Activated CD8-positive, alpha-beta T cell treated with anti-CD3 and anti-CD28 coated beads for 36 hours (primary cell): ENCODE measurements at regions of chr6 and their contacts with region 1.

Region 1: GRCh38 chr6:100479179-100480035 is 14.7 kb upstream of the SIM1 start:
- DNase-seq: no peak
- ATAC-seq: peak; percentile 55
- H3K4me3 Mint-ChIP-seq: no peak overlapping the region
- H3K27ac Mint-ChIP-seq: no peak overlapping the region
- H3K4me1 Mint-ChIP-seq: no peaks in the 10 kb centered on the region
- H3K27me3 Mint-ChIP-seq: peaks cover 26% of the 10 kb centered on the region
- CTCF ChIP-seq: peak; percentile 69

Region 2: DNA sequence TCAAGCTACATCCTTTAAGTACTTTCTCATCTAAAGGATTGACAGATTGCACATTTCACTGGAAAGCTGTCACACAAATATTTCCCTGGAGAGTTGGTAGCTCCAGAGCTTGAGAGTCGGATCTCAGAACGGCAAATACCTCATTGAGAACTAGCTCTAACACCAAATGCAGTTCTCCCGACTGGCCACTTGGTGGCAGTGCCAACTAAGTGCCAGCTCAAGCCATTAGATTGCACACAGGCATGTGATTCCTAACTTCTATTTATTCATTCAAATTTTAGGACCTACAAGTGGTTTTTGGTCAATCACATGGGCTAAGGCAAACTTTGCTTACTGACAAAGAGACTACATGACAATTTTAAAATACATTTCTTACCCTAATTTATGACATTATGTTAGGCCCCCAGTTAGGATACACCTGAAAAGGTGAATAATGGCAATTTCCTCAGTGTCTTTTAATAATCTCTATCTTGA is 477.5 kb before region 1 on chr6:
- CTCF ChIA-PET with region 1: interaction called, 6 read pairs
- POLR2A ChIA-PET with region 1: no interaction called
- intact Hi-C with region 1: loop called (anchors 5 kb)
- DNase-seq: peak; percentile 43
- ATAC-seq: peak; percentile 74
- H3K4me3 Mint-ChIP-seq: no peak overlapping the region
- H3K27ac Mint-ChIP-seq: no peak overlapping the region
- H3K4me1 Mint-ChIP-seq: no peaks in the 10 kb centered on the region
- H3K27me3 Mint-ChIP-seq: peaks cover 18% of the 10 kb centered on the region
- CTCF ChIP-seq: peak; percentile 94

Region 3: DNA sequence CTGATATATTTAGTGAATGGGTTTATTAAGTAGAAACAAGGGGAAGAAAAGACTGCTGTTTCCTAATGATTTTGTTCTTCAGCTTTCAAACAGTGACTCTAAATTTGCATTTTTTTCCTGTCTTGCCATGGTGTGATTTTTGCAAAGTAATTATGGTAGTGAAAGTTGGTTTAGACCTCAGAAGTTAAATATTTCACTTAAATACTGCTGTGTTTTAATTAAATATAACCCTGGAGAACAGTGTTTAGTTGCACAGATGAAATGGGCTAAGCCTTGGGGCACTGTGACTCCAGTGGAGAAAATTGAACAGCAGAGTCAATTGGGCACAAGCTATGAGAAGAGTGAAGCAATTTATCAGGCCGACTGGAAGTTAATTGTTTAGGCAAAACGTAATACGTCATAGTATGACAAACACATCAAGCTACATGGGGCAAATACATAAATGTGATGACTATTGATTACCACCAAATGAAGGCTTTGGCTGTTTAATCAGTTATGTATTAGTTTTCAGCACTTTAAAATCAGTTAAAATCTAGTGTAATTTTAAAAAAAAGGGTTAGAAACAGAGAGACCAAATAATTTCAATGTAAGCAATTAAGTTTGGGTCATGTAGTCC is 374.2 kb before region 1 on chr6:
- CTCF ChIA-PET with region 1: interaction called, 4 read pairs
- POLR2A ChIA-PET with region 1: no interaction called
- intact Hi-C with region 1: loop called (anchors 2 kb)
- DNase-seq: no peak
- ATAC-seq: no peak
- H3K4me3 Mint-ChIP-seq: no peak overlapping the region
- H3K27ac Mint-ChIP-seq: no peak overlapping the region
- H3K4me1 Mint-ChIP-seq: no peaks in the 10 kb centered on the region
- H3K27me3 Mint-ChIP-seq: peaks cover 13% of the 10 kb centered on the region
- CTCF ChIP-seq: no peak

Region 4: GRCh38 chr6:100116411-100117194 is 362.8 kb before region 1 on chr6:
- CTCF ChIA-PET with region 1: interaction called, 3 read pairs
- POLR2A ChIA-PET with region 1: no interaction called
- intact Hi-C with region 1: loop called (anchors 2 kb)
- DNase-seq: peak; percentile 61
- ATAC-seq: no peak
- H3K4me3 Mint-ChIP-seq: no peak overlapping the region
- H3K27ac Mint-ChIP-seq: no peak overlapping the region
- H3K4me1 Mint-ChIP-seq: no peaks in the 10 kb centered on the region
- H3K27me3 Mint-ChIP-seq: peaks cover 11% of the 10 kb centered on the region
- CTCF ChIP-seq: peak; percentile 44